Psoas muscle (tissue), 8 donors: ENCODE measurements at regions of chr7 and their contacts with region 1.

Region 1: GRCh38 chr7:101333912-101334311 is 12.3 kb upstream of the IFT22 start:
- DNase-seq: no peak
- ATAC-seq: no peak
- H3K4me3 ChIP-seq: no peak overlapping the region
- H3K27ac ChIP-seq: no peak overlapping the region
- H3K4me1 ChIP-seq: no peaks in the 10 kb centered on the region
- H3K27me3 ChIP-seq: peaks cover 0 to 14% (median 7%) of the 10 kb centered on the region in 3 donors
- CTCF ChIP-seq: no peak

Region 2: DNA sequence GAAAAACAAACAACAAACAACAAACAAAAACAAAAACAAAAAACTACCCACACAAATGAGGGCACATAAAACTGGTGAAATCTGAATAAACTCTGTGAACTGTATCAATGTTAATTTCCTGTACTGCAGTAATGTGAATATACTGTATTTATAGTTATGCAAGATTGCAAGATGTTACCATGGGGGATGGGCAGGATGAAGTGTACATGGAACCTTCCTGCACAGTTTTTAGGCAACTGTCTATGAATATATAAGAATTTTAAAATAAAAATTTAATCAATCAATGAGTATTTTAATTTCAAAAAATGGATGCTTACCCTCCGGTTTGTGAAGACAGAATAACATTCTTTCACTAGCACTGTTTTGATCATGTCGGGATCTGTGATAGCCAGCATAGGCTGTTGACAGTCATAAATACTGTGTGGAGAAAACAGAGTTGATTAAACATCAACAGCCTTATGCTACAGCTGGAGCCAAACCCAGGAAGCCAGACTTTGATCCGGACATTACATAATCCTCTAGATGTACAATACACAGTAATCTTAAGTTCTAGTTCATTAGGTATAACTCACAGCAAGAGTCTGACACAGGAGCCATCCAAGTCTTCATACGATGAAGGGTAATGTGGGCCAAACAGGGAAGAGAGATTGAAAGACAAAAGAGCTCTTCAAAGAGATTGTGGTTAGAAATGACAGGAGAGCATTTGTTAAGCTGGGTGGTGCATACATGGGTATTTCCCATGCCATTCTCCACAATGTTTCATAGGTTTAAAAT is 1613.7 kb before region 1 on chr7:
- intact Hi-C with region 1: loop called in 1 of 2 experiments (anchors 10 kb)
- DNase-seq: no peak
- ATAC-seq: no peak
- H3K4me3 ChIP-seq: no peak overlapping the region
- H3K27ac ChIP-seq: no peak overlapping the region
- H3K4me1 ChIP-seq: no peaks in the 10 kb centered on the region
- H3K27me3 ChIP-seq: no peaks in the 10 kb centered on the region
- CTCF ChIP-seq: no peak